ENCODE measurements at regions of chr7 and their contacts with region 1.

Region 1: GRCh38 chr7:135748770-135749169 is at the start of gene FAM180A:
- DNase-seq: peak; percentile 89
- total RNA-seq, gene FAM180A: 11.9 to 38.1 TPM

Region 2: DNA sequence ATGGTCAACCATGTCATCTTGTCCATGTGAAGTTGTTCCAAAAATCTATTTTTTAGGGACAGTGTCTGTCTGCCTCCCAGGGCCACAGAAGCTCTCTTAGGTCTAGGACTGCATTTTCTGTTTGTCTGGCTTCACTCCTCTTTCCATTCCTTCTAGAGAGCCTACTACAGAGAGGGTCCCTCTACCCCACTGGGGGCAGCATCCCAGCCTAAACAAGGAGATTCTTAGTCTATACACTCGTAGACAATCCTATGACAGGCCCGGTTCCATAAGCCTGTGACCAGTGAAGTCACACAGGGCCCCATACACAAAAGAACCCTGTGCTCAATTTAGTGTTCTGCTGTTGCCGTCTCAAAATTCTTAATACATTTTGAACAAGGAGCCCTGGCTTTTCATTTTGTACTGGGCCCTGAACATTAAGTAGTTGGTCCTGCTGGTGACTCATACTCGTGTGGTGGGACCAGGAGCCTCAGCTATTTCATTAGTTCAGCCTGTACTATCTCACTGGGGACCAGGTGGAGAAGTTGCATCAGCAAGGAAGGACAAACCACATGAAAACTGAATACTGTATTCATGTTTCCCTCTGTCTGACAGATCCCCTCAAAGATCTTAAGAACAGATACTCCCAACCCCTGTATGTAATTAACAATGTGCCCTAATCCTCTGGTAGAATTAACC is 23.3 kb after region 1 on chr7:
- intact Hi-C with region 1: loop called in 1 of 2 experiments (anchors 1 kb)
- DNase-seq: no peak

Measured in posterior vena cava (tissue), 2 donors.